T-cell (primary cell): ENCODE measurements at regions of chr14 and their contacts with region 1.

Region 1: GRCh38 chr14:93184388-93185353 is at the starts of genes LYSET and MOAP1:
- DNase-seq: peak; percentile 84 to 95 (median 90)
- ATAC-seq: peak; percentile 91 to 93 (median 92)
- H3K4me3 ChIP-seq: peak within 1 kb of the TSS; percentile 85 to 92
- H3K4me3 Mint-ChIP-seq: peak within 1 kb of the TSS; percentile 91 to 95 (median 92)
- H3K27ac ChIP-seq: peak within 1 kb of the TSS; percentile 97
- H3K27ac Mint-ChIP-seq: peak within 1 kb of the TSS; percentile 94 to 97
- H3K4me1 ChIP-seq: peaks cover 24 to 30% of the 10 kb centered on the region in 2 experiments
- H3K4me1 Mint-ChIP-seq: peaks cover 39 to 44% (median 41%) of the 10 kb centered on the region in 3 donors
- H3K27me3 ChIP-seq: no peaks in the 10 kb centered on the region
- H3K27me3 Mint-ChIP-seq: no peaks in the 10 kb centered on the region
- total RNA-seq, gene LYSET: 7.9 to 16.9 (median 14.8) TPM
- total RNA-seq, gene MOAP1: 45.1 to 96.8 (median 47.9) TPM

Region 2: GRCh38 chr14:93206793-93207467 is 22.3 kb after region 1 on chr14 and contains the starts of genes GON7 and UBR7:
- CTCF ChIA-PET with region 1: interaction called, 3 to 18 read pairs
- POLR2A ChIA-PET with region 1: interaction called in 1 of 2 experiments, 11 read pairs
- DNase-seq: peak; percentile 67 to 93 (median 81)
- ATAC-seq: peak; percentile 97 to 98 (median 98)
- H3K4me3 ChIP-seq: peak within 1 kb of the TSS; percentile 79 to 85
- H3K4me3 Mint-ChIP-seq: peak within 1 kb of the TSS; percentile 96 to 100 (median 97)
- H3K27ac ChIP-seq: peak within 1 kb of the TSS; percentile 46
- H3K27ac Mint-ChIP-seq: peak within 1 kb of the TSS; percentile 87 to 94
- H3K4me1 ChIP-seq: peaks cover 13 to 30% of the 10 kb centered on the region in 2 experiments
- H3K4me1 Mint-ChIP-seq: peaks cover 50 to 52% (median 50%) of the 10 kb centered on the region in 3 donors
- H3K27me3 ChIP-seq: no peaks in the 10 kb centered on the region
- H3K27me3 Mint-ChIP-seq: no peaks in the 10 kb centered on the region
- total RNA-seq, gene GON7: 4.3 to 11.4 (median 9.2) TPM
- total RNA-seq, gene UBR7: 12.0 to 16.9 (median 14.7) TPM

Region 3: GRCh38 chr14:93263416-93263815 is 78.7 kb after region 1 on chr14:
- CTCF ChIA-PET with region 1: no interaction called
- POLR2A ChIA-PET with region 1: no interaction called
- DNase-seq: no peak
- ATAC-seq: no peak
- H3K4me3 ChIP-seq: no peak overlapping the region
- H3K4me3 Mint-ChIP-seq: no peak overlapping the region
- H3K27ac ChIP-seq: no peak overlapping the region
- H3K27ac Mint-ChIP-seq: no peak overlapping the region
- H3K4me1 ChIP-seq: peaks cover 0 to 4% of the 10 kb centered on the region in 2 experiments
- H3K4me1 Mint-ChIP-seq: peaks cover 19 to 30% (median 28%) of the 10 kb centered on the region in 3 donors
- H3K27me3 ChIP-seq: no peaks in the 10 kb centered on the region
- H3K27me3 Mint-ChIP-seq: no peaks in the 10 kb centered on the region

Region 4: DNA sequence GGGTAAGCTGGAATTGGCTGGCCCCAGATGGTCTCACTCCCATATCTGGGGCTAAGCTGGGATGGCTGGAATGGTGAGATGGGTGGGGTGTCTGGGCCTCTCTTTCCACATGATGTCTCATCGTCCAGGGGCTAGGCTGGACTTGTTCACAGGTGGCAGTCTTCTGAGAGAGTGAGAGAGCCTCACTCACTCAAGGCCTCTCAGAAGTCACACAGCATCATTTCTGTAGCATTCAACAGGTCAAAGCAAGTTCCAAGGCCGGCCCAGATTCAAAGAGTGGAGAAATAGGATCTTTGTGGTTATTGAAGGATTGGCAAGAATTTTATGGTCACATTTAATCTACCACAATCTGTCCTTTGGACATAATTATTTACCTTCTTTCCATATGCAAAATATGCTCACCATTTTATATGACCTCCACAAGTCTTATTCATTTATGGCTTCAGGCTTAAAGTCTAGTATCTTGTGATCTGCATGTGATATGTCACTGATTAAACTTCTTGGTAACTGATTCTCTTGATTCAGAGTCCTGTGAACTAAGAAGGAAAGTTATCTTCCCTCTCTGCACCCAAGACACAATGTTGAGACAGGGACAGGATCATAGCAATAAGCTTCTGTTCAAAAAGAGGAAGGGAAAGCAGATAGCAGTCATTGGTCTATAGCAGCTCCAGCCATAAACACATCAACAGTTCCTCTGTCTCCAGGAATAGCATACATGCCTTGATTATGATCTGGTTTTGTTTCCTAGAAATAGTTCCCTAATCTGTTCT is 349.0 kb after region 1 on chr14:
- CTCF ChIA-PET with region 1: no interaction called
- POLR2A ChIA-PET with region 1: no interaction called
- DNase-seq: no peak
- ATAC-seq: no peak
- H3K4me3 ChIP-seq: no peak overlapping the region
- H3K4me3 Mint-ChIP-seq: no peak overlapping the region
- H3K27ac ChIP-seq: no peak overlapping the region
- H3K27ac Mint-ChIP-seq: no peak overlapping the region
- H3K4me1 ChIP-seq: no peaks in the 10 kb centered on the region
- H3K4me1 Mint-ChIP-seq: no peaks in the 10 kb centered on the region
- H3K27me3 ChIP-seq: peaks cover 0 to 4% of the 10 kb centered on the region in 2 experiments
- H3K27me3 Mint-ChIP-seq: peaks cover 25 to 35% of the 10 kb centered on the region in 2 donors